ENCODE measurements at regions of chr2 and their contacts with region 1.

Region 1: DNA sequence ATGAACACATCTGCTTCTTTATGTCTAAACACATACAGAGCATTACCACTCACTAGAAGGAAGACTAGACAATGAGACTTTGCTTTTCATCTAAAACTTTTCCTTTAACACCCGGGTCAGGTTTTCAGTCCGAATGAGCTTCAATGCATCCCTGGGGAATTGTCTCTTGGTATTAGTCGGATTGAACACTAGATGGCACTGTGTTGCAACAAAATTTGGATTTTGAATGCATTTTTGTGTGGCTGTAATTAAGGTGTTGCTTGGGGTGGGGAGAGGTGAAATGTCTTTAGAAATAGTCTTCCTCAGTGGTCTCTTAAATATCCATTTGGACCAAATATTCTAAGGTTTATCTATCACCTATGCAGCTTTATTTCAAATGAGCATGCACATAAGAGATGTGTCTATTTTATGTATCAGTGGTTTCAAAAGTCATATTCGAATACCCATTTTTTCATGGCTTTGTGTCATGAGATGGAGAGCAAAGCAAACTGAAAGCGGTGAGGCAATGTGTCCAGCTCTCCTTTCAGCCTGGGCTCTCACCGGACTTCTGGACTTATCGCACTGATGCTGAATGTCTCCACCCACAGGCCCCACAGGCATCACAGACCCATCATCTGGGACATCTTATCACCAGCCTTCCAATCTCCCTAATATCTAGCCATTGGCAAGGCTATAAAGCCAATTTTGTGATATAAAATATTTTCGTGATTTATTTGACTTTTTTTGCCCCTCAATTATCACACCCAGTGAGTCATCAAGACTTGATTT is 510.3 kb downstream of the RNF144A start:
- DNase-seq: peak; percentile 38
- ATAC-seq: peak; percentile 73
- H3K4me3 ChIP-seq: no peak overlapping the region
- H3K27ac ChIP-seq: no peak overlapping the region
- H3K4me1 ChIP-seq: no peaks in the 10 kb centered on the region
- H3K27me3 ChIP-seq: peaks cover 29% of the 10 kb centered on the region
- CTCF ChIP-seq: peak; percentile 44 to 76 (median 56); a peak in 4 of 6 replicates
- POLR2A ChIP-seq: no peak
- RAD21 ChIP-seq: peak; percentile 81

Region 2: GRCh38 chr2:6602471-6602870 is 825.0 kb before region 1 on chr2:
- CTCF ChIA-PET with region 1: no interaction called
- POLR2A ChIA-PET with region 1: no interaction called
- RAD21 ChIA-PET with region 1: no interaction called
- intact Hi-C with region 1: no loop called
- DNase-seq: no peak
- ATAC-seq: no peak
- H3K4me3 ChIP-seq: no peak overlapping the region
- H3K27ac ChIP-seq: no peak overlapping the region
- H3K4me1 ChIP-seq: no peaks in the 10 kb centered on the region
- H3K27me3 ChIP-seq: no peaks in the 10 kb centered on the region
- CTCF ChIP-seq: no peak
- POLR2A ChIP-seq: no peak
- RAD21 ChIP-seq: no peak

Region 3: GRCh38 chr2:7118606-7119503 is 308.6 kb before region 1 on chr2:
- CTCF ChIA-PET with region 1: no interaction called
- POLR2A ChIA-PET with region 1: no interaction called
- RAD21 ChIA-PET with region 1: no interaction called
- intact Hi-C with region 1: loop called (anchors 2 kb)
- DNase-seq: no peak
- ATAC-seq: peak; percentile 78
- H3K4me3 ChIP-seq: no peak overlapping the region
- H3K27ac ChIP-seq: no peak overlapping the region
- H3K4me1 ChIP-seq: peaks cover 0 to 4% of the 10 kb centered on the region in 2 experiments; a peak in 2 of 4 replicates
- H3K27me3 ChIP-seq: peaks cover 7% of the 10 kb centered on the region; the same call in 1 of the 2 replicates
- CTCF ChIP-seq: peak; percentile 47 to 69 (median 48); a peak in 5 of 6 replicates
- POLR2A ChIP-seq: no peak
- RAD21 ChIP-seq: peak; percentile 74

Region 4: GRCh38 chr2:8285081-8285480 is 857.6 kb after region 1 on chr2:
- CTCF ChIA-PET with region 1: interaction called, 3 read pairs
- POLR2A ChIA-PET with region 1: no interaction called
- RAD21 ChIA-PET with region 1: interaction called in 1 of 2 experiments, 4 read pairs
- intact Hi-C with region 1: loop called (anchors 5 kb)
- DNase-seq: peak; percentile 7
- ATAC-seq: peak; percentile 63
- H3K4me3 ChIP-seq: no peak overlapping the region
- H3K27ac ChIP-seq: no peak overlapping the region
- H3K4me1 ChIP-seq: peaks cover 0 to 9% of the 10 kb centered on the region in 2 experiments; a peak in 1 of 4 replicates
- H3K27me3 ChIP-seq: no peaks in the 10 kb centered on the region
- CTCF ChIP-seq: peak; percentile 4 to 51 (median 38); a peak in 4 of 6 replicates
- POLR2A ChIP-seq: no peak
- RAD21 ChIP-seq: peak; percentile 65

Region 5: DNA sequence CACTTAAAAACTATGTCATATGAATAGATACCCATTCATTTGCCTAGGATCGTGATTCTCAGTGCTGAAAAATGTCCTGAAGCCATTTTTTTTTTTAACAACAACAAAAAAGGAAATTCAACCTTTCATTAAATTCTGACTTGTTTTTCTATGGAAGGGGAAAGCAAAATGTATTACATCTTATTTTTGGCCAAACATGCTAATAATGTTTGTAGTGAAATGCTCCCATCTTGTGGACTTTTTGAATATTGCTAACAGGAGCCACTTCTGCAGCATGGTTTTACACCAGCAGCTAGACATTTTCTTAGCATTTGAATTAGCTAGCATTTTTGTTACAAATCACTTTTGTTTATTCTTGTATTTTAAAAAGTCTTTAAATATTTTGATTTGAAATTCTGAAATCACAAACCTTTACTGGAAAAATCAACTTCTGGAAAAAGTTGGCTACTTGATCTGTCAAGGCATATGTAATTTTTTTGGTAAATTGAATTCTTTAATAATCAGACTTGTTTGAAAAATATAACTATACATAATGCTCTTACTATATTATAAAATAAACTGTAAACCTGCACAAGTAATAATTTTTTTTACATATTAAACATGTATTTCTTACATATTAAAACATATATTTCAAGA is 1334.2 kb after region 1 on chr2:
- CTCF ChIA-PET with region 1: no interaction called
- POLR2A ChIA-PET with region 1: no interaction called
- RAD21 ChIA-PET with region 1: no interaction called
- intact Hi-C with region 1: loop called (anchors 1 kb)
- DNase-seq: peak; percentile 23
- ATAC-seq: no peak
- H3K4me3 ChIP-seq: no peak overlapping the region
- H3K27ac ChIP-seq: no peak overlapping the region
- H3K4me1 ChIP-seq: no peaks in the 10 kb centered on the region; a peak in 1 of 4 replicates
- H3K27me3 ChIP-seq: no peaks in the 10 kb centered on the region
- CTCF ChIP-seq: peak; percentile 32 to 62 (median 43); a peak in 4 of 6 replicates
- POLR2A ChIP-seq: no peak
- RAD21 ChIP-seq: peak; percentile 68